Posterior cingulate gyrus (tissue), 11 donors: ENCODE measurements at regions of chr12 and their contacts with region 1.

Region 1: DNA sequence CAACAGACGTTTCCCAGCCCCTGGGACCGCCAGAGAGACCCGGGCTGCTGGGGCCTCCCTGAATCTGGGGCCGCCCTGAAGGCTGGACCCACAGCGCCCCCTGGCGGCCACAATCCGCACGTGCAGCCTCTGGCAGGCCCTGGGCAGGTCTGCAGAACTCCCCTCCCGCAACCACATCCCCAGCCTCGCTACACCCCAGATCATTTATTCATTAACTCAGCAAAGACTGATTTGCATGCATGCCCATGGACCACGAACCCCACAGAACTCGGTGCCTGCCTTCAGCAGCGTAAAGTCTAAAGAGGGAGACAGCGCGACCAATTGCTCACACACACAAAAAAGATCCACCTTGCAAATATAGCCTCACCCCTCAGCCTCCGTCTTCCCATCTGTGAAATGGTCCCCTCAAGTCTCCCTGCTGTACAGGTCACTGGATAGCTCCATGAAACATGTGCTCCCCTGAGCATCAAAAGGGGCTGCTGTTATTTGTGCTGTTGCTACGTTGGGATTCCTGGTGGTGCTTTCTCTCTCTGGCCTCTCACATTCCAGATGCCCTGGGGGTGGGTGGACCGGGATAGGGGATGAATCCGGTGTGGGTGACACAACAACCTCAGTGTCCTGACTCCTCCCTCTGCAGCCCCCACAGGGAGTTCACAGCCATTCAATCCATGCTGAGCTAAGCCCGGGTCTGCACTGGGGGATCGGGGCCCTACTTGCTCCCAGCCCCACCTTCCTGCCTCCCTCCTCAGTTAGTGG is 96.4 kb downstream of the SCARB1 start:
- DNase-seq: peak; percentile 70 to 98 (median 89)

Region 2: DNA sequence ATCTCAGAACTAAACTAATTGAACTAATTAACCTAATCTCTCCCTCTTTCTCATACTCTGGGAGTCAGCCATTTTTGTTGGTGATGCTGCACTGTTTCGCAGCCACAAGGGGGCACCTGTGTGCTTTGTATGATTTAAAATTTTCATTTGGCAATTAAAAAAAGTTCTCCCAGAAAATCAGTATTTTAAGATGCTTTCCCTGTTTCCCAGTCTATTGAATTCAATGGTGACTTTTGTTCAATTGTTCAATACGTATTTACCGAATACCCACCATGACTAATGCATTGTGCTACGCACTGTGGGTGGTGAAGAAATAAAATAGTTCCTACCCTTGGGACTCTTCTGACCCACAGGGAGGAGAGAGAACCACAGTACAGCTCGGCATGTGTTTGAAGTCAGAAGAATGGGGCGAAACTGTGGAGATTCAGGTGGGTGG is 730.6 kb before region 1 on chr12:
- intact Hi-C with region 1: loop called (anchors 5 kb)
- DNase-seq: peak in 6 of 10 donors; percentile 49 to 89 (median 58)

Region 3: DNA sequence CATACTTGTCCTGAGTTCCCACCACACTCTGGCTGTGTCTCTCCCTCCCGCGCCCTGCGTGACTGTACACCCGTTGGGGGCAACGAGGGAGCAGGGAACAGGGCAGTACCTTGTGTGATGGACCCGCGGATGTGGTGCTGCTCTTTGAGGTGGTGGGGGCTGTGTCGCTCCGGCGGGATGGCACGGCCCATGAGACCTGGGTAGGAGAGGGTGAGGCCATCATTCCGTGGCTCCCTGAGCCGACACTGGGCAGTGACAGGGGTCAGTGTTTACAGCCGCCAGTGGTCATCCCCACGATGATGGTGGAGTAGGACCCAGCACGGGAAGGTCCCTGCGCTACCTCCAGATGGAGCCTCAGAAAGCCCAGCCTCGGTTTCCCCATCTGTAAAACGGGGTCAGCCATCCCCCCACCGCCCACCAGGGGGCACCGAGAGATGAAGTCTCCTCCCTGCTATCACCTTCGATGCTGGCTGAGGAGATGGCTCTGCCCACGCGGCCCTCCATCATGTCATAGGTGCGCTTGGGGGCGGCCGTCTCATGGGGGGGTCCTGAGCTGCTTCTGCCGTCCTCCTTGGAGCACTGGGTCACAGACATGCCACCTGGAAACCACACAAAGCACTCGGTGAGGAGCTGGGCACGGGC is 419.4 kb before region 1 on chr12:
- intact Hi-C with region 1: loop called (anchors 10 kb)
- DNase-seq: no peak

Region 4: DNA sequence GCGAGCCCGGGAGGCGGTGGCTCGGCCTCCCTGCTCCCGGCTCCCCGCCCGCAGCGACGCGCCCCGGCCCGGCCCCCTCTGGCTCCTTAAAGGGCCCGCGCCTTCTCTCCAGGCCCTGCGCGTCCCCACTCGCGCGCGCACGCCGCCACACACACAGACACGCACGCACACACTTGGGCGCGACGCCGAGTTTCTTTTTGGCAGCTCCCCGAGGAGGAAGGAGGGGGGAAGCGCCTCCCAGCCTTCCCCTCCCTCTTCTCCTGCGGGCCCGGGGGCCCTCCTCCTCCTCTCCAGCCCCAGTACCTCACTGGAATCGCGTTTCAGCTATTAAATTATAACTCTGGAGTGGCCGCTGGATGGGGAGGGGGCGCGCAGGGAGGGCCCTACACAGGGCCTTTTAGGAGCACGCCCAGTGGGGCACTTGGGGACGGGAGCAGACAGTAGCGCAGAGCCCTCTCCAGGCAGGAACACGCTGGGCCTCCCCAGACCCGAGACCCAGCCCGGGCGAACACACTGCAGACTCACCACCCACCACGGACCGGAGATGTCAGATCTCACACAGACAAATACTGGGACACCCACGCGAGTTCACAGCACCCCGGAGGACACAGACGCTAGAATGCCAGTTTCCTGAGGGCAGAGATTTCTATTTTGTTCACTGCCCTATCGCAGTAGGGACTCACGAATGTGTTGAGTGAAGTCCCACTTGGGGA is 199.4 kb before region 1 on chr12:
- intact Hi-C with region 1: loop called (anchors 1 kb)
- DNase-seq: peak; percentile 77 to 99 (median 92)

Region 5: GRCh38 chr12:124906606-124907261 is 139.5 kb after region 1 on chr12:
- intact Hi-C with region 1: loop called (anchors 10 kb)
- DNase-seq: peak in 9 of 10 donors; percentile 48 to 94 (median 84)